GM23248 (cell line): ENCODE measurements at regions of chr14 and their contacts with region 1.

Region 1: GRCh38 chr14:64294672-64295413 is 672 bp upstream of the ESR2 start:
- DNase-seq: peak; percentile 63
- H3K4me3 ChIP-seq: peak overlapping the region; percentile 65
- H3K27ac ChIP-seq: no peak overlapping the region
- H3K4me1 ChIP-seq: peaks cover 12% of the 10 kb centered on the region
- H3K27me3 ChIP-seq: peaks cover 60% of the 10 kb centered on the region

Region 2: GRCh38 chr14:64026600-64026999 is 268.2 kb before region 1 on chr14:
- in situ Hi-C with region 1: loop called (anchors 10 kb)
- DNase-seq: no peak
- H3K4me3 ChIP-seq: no peak overlapping the region
- H3K27ac ChIP-seq: no peak overlapping the region
- H3K4me1 ChIP-seq: no peaks in the 10 kb centered on the region
- H3K27me3 ChIP-seq: no peaks in the 10 kb centered on the region

Region 3: DNA sequence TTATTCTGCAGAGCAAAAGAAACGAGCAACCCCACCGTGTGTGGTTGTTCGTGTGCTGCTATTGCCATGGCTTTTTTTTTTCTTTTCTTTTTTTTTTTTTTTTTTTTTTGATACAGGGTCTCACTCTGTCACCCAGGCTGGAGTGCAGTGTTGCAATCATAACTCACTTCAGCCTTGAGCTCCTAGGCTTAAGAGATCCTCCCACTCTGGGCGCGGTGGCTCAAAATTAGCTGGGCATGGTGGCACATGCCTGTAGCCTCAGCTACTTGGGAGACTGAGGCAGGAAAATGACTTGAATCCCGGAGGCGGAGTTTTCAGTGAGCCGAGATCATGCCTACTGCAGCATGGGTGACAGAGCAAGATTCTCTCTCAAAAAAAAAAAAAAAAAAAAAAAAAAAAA is 144.9 kb before region 1 on chr14:
- in situ Hi-C with region 1: no loop called
- DNase-seq: no peak
- H3K4me3 ChIP-seq: no peak overlapping the region
- H3K27ac ChIP-seq: no peak overlapping the region
- H3K4me1 ChIP-seq: no peaks in the 10 kb centered on the region
- H3K27me3 ChIP-seq: no peaks in the 10 kb centered on the region